B cell (primary cell): ENCODE measurements at regions of chr9 and their contacts with region 1.

Region 1: DNA sequence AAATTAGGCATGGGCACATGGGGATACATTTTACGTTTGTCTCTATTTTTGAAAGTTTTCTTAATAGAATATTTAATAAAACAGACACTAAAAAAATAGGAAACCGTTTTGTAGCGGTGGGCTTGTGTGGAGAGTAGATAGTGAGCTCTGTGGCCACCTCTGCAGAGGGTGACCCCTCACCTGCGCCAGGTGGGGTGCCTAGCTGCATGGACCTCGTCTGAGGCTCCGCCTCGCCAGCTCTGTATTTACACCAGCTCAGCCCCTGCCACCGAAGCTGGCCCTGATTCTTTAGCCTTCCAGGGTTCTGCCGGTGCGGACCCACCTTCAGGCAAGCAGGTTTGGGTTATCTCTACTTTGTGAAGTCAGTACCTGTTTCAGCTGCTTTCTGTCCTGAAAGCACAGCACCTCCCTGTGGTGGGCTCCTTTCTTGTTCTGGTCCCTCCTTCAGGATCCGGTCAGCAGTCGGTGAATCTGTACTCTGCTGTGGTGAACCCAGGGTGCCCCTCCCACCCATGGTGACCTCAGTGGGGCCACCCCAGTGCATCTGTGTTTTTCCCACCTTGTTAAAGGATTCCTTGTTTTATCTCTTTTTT is 105.2 kb upstream of the CACNA1B start:
- DNase-seq: peak; percentile 56
- ATAC-seq: peak; percentile 39
- H3K4me3 ChIP-seq: no peak overlapping the region
- H3K4me3 Mint-ChIP-seq: no peak overlapping the region
- H3K27ac ChIP-seq: no peak overlapping the region
- H3K27ac Mint-ChIP-seq: peak overlapping the region; percentile 56
- H3K4me1 ChIP-seq: no peaks in the 10 kb centered on the region
- H3K4me1 Mint-ChIP-seq: peaks cover 21% of the 10 kb centered on the region
- H3K27me3 ChIP-seq: no peaks in the 10 kb centered on the region
- H3K27me3 Mint-ChIP-seq: no peaks in the 10 kb centered on the region
- CTCF ChIP-seq: peak; percentile 39

Region 2: DNA sequence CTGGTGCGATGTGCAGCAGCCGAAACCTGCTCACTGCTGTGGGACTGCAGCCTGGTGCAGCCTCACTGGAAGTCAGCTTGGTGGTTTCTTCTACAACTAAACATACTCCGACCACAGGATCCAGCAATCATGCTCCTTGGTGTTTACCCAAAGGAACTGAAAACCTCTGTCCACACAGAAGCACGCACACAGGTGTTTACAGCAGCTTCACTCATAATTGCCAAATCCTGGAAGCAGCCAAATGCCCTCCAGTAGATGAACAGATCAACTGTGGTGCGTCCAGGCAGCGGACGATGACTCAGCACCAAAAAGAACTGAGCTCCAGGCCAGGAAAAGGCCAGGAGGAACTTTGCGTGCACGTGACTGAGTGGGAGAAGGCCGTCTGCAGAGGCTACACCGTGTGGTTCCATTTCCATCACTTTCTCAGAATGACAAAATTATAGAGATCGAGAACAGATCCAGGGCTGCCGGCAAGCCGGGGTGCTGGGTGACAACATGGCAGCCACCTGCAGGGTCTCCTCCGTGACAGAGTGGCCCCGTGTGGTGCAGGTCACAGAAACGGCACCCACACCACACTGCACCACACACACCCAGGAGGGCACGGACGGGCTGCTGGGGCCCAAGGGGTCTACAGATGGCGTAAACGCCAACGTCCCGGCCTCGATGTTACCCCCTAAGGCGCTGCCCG is 290.1 kb before region 1 on chr9:
- CTCF ChIA-PET with region 1: no interaction called
- POLR2A ChIA-PET with region 1: no interaction called
- intact Hi-C with region 1: no loop called
- DNase-seq: no peak
- ATAC-seq: no peak
- H3K4me3 ChIP-seq: no peak overlapping the region
- H3K4me3 Mint-ChIP-seq: no peak overlapping the region
- H3K27ac ChIP-seq: no peak overlapping the region
- H3K27ac Mint-ChIP-seq: no peak overlapping the region
- H3K4me1 ChIP-seq: no peaks in the 10 kb centered on the region
- H3K4me1 Mint-ChIP-seq: no peaks in the 10 kb centered on the region
- H3K27me3 ChIP-seq: no peaks in the 10 kb centered on the region
- H3K27me3 Mint-ChIP-seq: no peaks in the 10 kb centered on the region
- CTCF ChIP-seq: no peak

Region 3: GRCh38 chr9:137721899-137722298 is 50.5 kb before region 1 on chr9:
- CTCF ChIA-PET with region 1: interaction called, 3 read pairs
- POLR2A ChIA-PET with region 1: no interaction called
- intact Hi-C with region 1: loop called (anchors 1 kb)
- DNase-seq: peak; percentile 62
- ATAC-seq: no peak
- H3K4me3 ChIP-seq: no peak overlapping the region
- H3K4me3 Mint-ChIP-seq: peak overlapping the region; percentile 64
- H3K27ac ChIP-seq: peak overlapping the region in 1 of 2 donors; percentile 93
- H3K27ac Mint-ChIP-seq: peak overlapping the region; percentile 91
- H3K4me1 ChIP-seq: peaks cover 24 to 30% of the 10 kb centered on the region in 2 donors
- H3K4me1 Mint-ChIP-seq: peaks cover 40% of the 10 kb centered on the region
- H3K27me3 ChIP-seq: no peaks in the 10 kb centered on the region
- H3K27me3 Mint-ChIP-seq: no peaks in the 10 kb centered on the region
- CTCF ChIP-seq: peak; percentile 73